ENCODE measurements at regions of chr3 and their contacts with region 1.

Region 1: DNA sequence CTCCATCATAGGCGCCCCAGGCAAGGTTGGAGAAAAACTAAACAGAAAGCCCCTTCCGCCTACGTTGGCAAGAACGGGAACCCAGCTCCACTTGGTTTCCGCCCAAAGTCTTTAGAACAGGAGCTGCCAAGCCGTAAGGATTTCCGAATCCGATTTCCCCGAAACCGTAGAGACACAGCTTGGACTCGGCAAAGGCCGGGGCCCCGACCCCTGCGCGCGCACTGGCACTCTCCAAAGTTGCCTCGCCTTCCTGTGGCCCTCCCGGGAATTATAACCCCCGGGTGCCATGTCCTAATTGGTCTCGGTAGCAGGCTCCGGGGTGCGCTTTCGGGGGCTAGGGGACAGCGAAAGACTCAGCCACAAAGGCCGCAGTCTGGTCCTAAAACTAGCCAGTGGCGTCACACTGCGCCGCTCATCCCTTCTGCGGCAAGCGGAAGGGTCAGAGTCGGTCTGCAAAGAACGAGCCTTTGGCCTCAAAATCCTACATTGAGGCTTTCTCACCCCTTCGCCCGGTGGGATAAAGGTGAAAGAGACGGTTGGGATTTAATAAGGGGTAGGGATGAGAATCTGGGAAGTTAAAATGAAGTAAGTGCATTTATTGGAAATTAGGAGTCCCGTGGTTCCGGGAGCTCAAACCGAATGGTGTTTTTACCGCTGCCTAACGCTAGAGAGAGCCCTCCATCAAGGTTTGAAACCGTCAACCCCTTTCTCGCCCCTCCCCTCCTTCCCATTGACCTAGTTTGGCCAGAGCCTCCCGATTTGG is 6.8 kb downstream of the BCL6 start:
- DNase-seq: peak; percentile 91 to 92
- H3K4me3 ChIP-seq: peak overlapping the region; percentile 27
- H3K4me1 ChIP-seq: peaks cover 29% of the 10 kb centered on the region
- H3K27me3 ChIP-seq: no peaks in the 10 kb centered on the region

Region 2: DNA sequence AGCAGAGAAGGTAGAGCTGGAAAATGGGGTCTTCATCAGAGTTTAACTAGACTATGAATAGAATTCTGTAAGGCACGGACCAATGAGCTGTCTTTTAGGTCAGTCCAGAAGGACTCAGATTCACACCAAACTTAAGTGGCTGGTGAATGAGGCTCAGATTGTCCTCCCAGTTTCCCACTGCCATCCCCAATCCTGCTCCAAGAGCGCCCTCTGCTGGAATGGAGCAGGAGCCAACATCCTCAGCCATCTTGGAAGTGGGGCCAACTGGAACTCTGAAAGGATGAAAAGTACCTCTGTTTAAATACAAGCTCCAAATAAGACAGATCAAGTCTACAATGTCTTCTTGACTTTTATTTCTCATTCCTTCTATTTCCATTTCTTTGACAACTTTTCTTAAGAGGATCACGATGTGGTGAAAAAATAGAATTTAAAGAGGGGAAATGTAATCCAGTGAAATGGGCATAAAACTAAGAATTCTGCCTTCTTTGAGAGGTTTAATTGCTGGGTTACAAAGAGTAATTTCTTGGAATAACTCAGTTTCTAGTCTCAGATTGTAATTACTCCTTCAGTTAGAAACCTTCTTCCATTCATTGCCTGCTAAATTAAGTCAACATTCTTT is 1216.2 kb after region 1 on chr3:
- in situ Hi-C with region 1: loop called (anchors 5 kb)
- DNase-seq: peak; percentile 64 to 88
- H3K4me3 ChIP-seq: no peak overlapping the region
- H3K4me1 ChIP-seq: no peaks in the 10 kb centered on the region
- H3K27me3 ChIP-seq: no peaks in the 10 kb centered on the region

Region 3: DNA sequence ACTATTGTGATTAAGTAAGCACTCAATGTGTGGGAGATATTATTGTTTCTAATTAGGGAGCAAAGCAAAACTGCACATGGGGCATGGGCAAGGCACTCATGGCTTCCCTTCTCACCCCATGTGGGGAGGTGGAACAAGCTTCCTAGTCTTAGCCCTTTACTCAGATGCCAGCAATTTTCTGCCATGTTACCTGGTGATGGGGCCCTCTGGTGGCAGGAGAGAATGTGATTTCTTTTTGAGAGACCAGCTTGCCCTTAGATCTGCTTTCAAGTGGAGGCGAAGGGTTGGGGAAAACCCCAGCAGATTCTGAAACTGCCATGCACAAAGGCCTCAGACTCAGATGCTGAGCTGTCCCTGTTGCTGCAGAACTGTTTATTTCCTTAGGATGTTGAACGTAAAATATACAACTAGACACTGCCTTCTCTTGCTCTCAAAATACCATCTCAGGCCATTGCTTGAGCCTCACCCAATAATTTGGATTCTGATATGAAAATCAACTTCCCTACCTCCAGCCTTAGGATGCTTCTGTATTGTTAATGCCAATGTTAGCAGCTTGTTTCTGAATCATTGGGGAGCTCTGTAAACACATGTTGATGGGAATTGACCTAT is 1303.1 kb after region 1 on chr3:
- in situ Hi-C with region 1: loop called (anchors 10 kb)
- DNase-seq: peak; percentile 45 to 72
- H3K4me3 ChIP-seq: no peak overlapping the region
- H3K4me1 ChIP-seq: no peaks in the 10 kb centered on the region
- H3K27me3 ChIP-seq: no peaks in the 10 kb centered on the region; the same call in 1 of the 2 replicates